Activated CD4-positive, alpha-beta T cell treated with anti-CD3 and anti-CD28 coated beads, Interleukin-2, amount 10 ng/mL, durations not matched to agents 24 days and 14 days (primary cell): ENCODE measurements at regions of chr10 and their contacts with region 1.

Region 1: GRCh38 chr10:131885391-131886161 is 15.2 kb upstream of the PPP2R2D start:
- DNase-seq: peak; percentile 95
- H3K4me3 Mint-ChIP-seq: no peak overlapping the region
- H3K27ac Mint-ChIP-seq: no peak overlapping the region
- H3K4me1 Mint-ChIP-seq: peaks cover 2% of the 10 kb centered on the region
- H3K27me3 Mint-ChIP-seq: peaks cover 7% of the 10 kb centered on the region

Region 2: DNA sequence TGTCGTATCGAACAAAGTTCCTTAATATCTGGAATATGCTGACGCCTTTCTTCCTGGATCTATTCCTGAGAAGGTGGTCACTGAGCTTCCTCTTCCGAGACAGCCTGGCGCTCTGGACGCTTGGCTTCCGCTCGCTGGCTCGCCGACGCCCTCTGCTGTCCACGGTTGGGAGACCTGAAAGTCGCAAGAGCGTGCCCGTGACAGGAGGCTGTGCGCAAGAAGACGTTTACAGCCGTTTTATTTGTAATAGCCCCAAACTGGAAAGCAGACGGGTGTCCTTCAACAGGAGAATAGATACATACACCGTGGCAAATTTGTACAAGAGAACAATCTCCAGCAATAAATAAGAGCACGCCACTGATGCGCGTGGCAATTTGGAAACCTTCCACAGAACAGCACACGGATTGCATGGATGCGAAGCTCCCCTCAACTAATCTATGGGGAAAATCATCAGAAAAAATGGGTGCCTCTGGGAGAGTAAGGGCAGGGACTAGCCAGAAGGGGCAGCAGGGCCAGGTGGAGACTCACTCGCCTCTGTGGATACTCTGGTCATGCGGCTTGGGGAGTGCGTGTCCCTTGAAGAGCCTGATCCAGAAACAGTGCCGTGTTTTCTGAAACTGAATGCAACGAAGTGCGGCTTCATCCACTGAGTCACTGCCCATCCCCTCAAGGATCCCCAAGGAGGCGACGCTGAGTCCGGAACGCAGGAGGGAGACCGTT is 137.7 kb after region 1 on chr10:
- intact Hi-C with region 1: loop called (anchors 1 kb)
- DNase-seq: peak; percentile 94
- H3K4me3 Mint-ChIP-seq: peak overlapping the region; percentile 7
- H3K27ac Mint-ChIP-seq: no peak overlapping the region
- H3K4me1 Mint-ChIP-seq: peaks cover 6% of the 10 kb centered on the region
- H3K27me3 Mint-ChIP-seq: peaks cover 21% of the 10 kb centered on the region

Region 3: GRCh38 chr10:132142411-132143161 is 257.0 kb after region 1 on chr10:
- intact Hi-C with region 1: loop called (anchors 5 kb)
- DNase-seq: peak; percentile 88
- H3K4me3 Mint-ChIP-seq: no peak overlapping the region
- H3K27ac Mint-ChIP-seq: no peak overlapping the region
- H3K4me1 Mint-ChIP-seq: no peaks in the 10 kb centered on the region
- H3K27me3 Mint-ChIP-seq: no peaks in the 10 kb centered on the region